HEK293 (cell line): ENCODE measurements at regions of chr6 and their contacts with region 1.

Region 1: DNA sequence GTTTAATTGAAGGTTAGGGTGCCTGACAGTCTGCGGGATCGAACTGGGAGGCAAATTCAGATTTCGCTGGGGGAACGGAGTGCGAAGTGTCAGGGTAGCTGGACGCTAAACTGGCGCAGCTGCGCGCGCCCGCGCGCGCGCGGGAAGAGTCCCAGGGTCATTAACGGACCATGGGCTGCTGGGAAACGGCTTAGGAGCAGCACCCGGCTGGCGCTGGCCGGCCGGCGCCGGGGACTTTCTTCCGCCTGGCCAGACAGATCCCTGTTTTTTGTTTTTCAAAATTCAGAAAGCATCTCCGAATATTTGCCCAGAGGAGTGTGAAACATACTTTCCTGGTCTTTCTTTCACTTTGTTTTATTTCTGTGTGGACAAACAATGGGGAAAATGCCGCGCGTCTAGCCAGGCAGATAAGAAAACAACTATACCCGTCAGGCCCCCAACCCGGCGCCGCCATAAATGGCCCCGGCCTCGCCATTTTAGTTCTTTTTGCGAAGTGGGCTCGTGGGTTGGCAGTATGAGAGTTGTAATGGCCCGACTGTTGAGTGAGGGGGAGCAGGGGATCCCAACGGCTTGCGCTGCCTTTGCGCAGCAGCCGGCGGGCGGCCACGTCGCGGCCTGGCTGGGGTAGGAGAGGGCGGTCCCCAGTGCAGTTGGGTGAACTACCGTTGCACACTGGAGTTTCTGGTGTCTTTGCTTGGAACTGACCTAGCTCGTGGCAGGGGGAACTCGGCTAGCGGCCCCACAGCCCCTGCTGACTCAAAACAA is 7.1 kb downstream of the HSPA1B start:
- H3K4me3 ChIP-seq: peak overlapping the region; percentile 79
- H3K27ac ChIP-seq: peak overlapping the region; percentile 88
- H3K4me1 ChIP-seq: peaks cover 9% of the 10 kb centered on the region
- CTCF ChIP-seq: 0 out of 2 replicates have a peak, but pooled peaks have one; percentile 41

Region 2: GRCh38 chr6:31660381-31661261 is 174.0 kb before region 1 on chr6 and contains the start of gene C6orf47:
- CTCF ChIA-PET with region 1: interaction called, 3 read pairs
- POLR2A ChIA-PET with region 1: interaction called, 11 read pairs
- H3K4me3 ChIP-seq: peak within 1 kb of the TSS; percentile 67
- H3K27ac ChIP-seq: peak within 1 kb of the TSS; percentile 73
- H3K4me1 ChIP-seq: peaks cover 6% of the 10 kb centered on the region; the same call in 1 of the 2 replicates
- CTCF ChIP-seq: no peak

Region 3: DNA sequence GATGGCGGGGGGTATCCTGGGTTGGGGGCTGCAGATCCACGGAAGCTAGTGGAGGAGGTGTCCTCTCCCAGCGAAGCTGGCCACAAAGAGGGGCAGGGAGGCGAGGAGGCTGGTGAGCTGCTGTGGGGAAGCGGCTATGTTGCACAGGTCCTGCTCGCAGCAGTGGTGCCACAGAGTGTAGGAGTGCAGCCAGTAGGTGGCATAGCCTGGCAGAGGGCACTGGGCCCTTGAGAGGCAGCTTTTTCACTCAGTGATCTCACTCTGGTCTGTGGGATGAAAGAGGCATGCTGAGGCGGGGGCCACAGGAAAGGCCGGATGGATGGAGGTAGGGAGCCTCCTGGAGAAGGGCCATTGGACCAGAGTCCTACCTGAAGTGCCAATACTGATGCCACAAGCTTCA is 122.3 kb before region 1 on chr6:
- CTCF ChIA-PET with region 1: interaction called, 4 read pairs
- POLR2A ChIA-PET with region 1: interaction called, 12 read pairs
- H3K4me3 ChIP-seq: no peak overlapping the region
- H3K27ac ChIP-seq: no peak overlapping the region
- H3K4me1 ChIP-seq: peaks cover 4% of the 10 kb centered on the region
- CTCF ChIP-seq: peak; percentile 42; the same call in 1 of the 2 replicates

Region 4: GRCh38 chr6:31739639-31740396 is 94.8 kb before region 1 on chr6 and contains the start of gene MSH5:
- CTCF ChIA-PET with region 1: interaction called, 17 read pairs
- POLR2A ChIA-PET with region 1: interaction called, 11 read pairs
- H3K4me3 ChIP-seq: peak within 1 kb of the TSS; percentile 61
- H3K27ac ChIP-seq: peak within 1 kb of the TSS; percentile 87
- H3K4me1 ChIP-seq: peaks cover 29% of the 10 kb centered on the region
- CTCF ChIP-seq: no peak

Region 5: DNA sequence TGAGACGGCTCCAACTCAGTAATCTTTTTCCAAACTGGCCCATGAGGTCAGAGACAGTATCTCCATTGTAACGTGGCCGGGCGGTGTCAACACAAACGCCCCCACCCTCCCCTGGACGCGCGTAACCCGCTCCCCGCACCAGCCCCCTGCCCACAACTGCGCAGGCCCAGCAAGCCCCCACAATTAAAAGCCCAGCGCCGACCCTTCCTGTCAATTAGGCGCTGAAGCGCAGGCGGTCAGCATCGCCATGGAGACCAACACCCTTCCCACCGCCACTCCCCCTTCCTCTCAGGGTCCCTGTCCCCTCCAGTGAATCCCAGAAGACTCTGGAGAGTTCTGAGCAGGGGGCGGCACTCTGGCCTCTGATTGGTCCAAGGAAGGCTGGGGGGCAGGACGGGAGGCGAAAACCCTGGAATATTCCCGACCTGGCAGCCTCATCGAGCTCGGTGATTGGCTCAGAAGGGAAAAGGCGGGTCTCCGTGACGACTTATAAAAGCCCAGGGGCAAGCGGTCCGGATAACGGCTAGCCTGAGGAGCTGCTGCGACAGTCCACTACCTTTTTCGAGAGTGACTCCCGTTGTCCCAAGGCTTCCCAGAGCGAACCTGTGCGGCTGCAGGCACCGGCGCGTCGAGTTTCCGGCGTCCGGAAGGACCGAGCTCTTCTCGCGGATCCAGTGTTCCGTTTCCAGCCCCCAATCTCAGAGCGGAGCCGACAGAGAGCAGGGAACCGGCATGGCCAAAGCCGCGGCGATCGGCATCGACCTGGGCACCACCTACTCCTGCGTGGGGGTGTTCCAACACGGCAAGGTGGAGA is 19.4 kb before region 1 on chr6 and contains the starts of genes HSPA1A and HSPA1L:
- CTCF ChIA-PET with region 1: interaction called, 10 read pairs
- POLR2A ChIA-PET with region 1: interaction called, 43 read pairs
- H3K4me3 ChIP-seq: peak within 1 kb of the TSS; percentile 46
- H3K27ac ChIP-seq: peak within 1 kb of the TSS; percentile 80
- H3K4me1 ChIP-seq: peaks cover 4% of the 10 kb centered on the region; the same call in 1 of the 2 replicates
- CTCF ChIP-seq: no peak

Region 6: GRCh38 chr6:31918069-31918720 is 83.6 kb after region 1 on chr6:
- CTCF ChIA-PET with region 1: interaction called, 4 read pairs
- POLR2A ChIA-PET with region 1: interaction called, 11 read pairs
- H3K4me3 ChIP-seq: no peak overlapping the region
- H3K27ac ChIP-seq: no peak overlapping the region
- H3K4me1 ChIP-seq: no peaks in the 10 kb centered on the region
- CTCF ChIP-seq: no peak